Activated naive CD4-positive, alpha-beta T cell treated with anti-CD3 and anti-CD28 coated beads, Interleukin-2, amount 10 ng/mL, durations not matched to agents 7 days and 5 days (primary cell): ENCODE measurements at regions of chr3 and their contacts with region 1.

Region 1: GRCh38 chr3:81490541-81491288 is 270.7 kb downstream of the GBE1 start:
- DNase-seq: peak; percentile 85
- H3K4me3 Mint-ChIP-seq: no peak overlapping the region
- H3K27ac Mint-ChIP-seq: no peak overlapping the region
- H3K4me1 Mint-ChIP-seq: no peaks in the 10 kb centered on the region
- H3K27me3 Mint-ChIP-seq: no peaks in the 10 kb centered on the region

Region 2: DNA sequence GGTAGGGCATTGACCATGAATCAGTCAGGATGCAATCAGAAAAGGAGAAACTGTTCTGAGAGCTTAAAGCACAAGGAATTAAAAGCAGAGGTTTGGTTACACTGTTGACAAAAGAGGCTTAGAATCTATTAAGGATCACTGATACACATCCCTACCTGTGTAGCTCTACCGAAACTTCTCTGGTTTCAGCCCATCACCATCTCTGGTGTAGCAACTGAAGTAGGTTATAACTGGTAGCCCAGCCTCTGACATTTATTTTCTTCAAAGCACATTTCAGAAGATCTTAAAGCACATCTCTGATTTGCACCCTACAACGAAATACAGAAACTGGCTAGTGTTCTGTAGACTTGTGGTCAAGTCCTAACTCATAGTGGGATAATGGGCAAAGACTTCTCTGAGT is 13.0 kb before region 1 on chr3:
- CTCF ChIA-PET with region 1: interaction called, 10 read pairs
- DNase-seq: no peak
- H3K4me3 Mint-ChIP-seq: no peak overlapping the region
- H3K27ac Mint-ChIP-seq: no peak overlapping the region
- H3K4me1 Mint-ChIP-seq: no peaks in the 10 kb centered on the region
- H3K27me3 Mint-ChIP-seq: no peaks in the 10 kb centered on the region

Region 3: DNA sequence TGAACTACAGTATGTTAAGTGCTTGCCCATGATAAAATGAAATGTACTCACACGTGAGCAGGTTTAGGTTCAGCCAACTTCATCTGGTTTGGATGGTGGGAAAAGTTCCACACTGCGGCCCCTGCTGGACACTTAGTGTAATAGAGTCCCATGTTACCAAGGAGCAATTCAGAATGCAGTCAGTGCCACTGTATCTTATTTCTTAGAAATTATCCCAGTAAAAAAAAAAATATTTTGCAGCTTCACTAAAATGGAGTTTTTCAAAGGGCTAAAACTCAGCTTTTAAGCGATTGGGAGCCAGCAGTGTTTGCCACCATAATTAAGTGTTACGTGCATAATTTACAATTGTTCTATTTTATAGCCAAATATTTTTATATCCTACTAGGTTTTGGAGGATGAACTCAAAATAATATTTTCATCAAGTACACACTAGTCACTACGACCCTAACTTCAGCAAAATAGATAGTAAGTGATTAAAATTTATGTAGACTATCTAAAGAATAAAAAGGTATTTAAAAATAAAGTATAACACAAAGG is 642.4 kb after region 1 on chr3:
- CTCF ChIA-PET with region 1: interaction called, 13 read pairs
- DNase-seq: peak; percentile 54
- H3K4me3 Mint-ChIP-seq: no peak overlapping the region
- H3K27ac Mint-ChIP-seq: no peak overlapping the region
- H3K4me1 Mint-ChIP-seq: no peaks in the 10 kb centered on the region
- H3K27me3 Mint-ChIP-seq: no peaks in the 10 kb centered on the region